ENCODE measurements at regions of chr1 and their contacts with region 1.

Region 1: DNA sequence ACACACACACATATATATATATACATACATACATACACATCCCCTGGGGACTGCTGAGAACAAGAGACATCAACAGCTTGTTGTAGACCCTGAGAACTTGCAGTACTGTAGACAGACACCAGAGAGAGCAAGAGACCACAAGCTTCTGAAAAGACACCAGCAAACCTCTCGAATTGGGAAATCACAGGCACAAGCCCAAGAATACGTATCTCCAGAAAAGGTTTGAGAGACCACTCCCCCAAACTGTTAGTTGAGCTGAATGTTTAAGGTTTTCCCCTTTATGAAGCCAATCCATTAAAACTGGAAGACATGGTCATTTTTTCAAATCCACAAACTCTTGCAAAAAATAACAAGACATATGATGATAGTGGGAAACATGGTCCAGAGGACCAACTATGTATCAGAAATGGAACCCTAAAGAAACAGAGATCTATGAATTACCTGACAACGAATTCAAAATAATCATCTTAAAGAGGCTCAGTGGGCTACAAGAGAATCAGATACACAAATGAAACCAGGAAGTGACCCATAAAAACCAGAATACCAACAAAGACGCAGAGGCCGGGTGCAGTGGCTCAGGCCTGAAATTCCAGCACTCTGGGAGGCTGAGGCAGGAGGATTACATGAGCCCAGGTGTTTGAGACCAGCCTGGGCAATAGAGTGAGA is 45.1 kb downstream of the SLC2A1 start:
- DNase-seq: peak; percentile 82
- ATAC-seq: peak; percentile 98
- H3K4me3 ChIP-seq: no peak overlapping the region
- H3K27ac ChIP-seq: no peak overlapping the region
- H3K4me1 ChIP-seq: no peaks in the 10 kb centered on the region
- H3K27me3 ChIP-seq: peaks cover 3% of the 10 kb centered on the region
- CTCF ChIP-seq: peak; percentile 77
- POLR2A ChIP-seq: no peak
- RAD21 ChIP-seq: peak; percentile 92

Region 2: GRCh38 chr1:42576935-42577334 is 336.6 kb before region 1 on chr1:
- CTCF ChIA-PET with region 1: no interaction called
- POLR2A ChIA-PET with region 1: no interaction called
- dilution Hi-C with region 1: no loop called
- in situ Hi-C with region 1: no loop called
- intact Hi-C with region 1: loop called (anchors 1 kb)
- DNase-seq: no peak
- ATAC-seq: no peak
- H3K4me3 ChIP-seq: no peak overlapping the region
- H3K27ac ChIP-seq: no peak overlapping the region
- H3K4me1 ChIP-seq: no peaks in the 10 kb centered on the region
- H3K27me3 ChIP-seq: peaks cover 3% of the 10 kb centered on the region
- CTCF ChIP-seq: no peak
- POLR2A ChIP-seq: no peak
- RAD21 ChIP-seq: no peak

Region 3: DNA sequence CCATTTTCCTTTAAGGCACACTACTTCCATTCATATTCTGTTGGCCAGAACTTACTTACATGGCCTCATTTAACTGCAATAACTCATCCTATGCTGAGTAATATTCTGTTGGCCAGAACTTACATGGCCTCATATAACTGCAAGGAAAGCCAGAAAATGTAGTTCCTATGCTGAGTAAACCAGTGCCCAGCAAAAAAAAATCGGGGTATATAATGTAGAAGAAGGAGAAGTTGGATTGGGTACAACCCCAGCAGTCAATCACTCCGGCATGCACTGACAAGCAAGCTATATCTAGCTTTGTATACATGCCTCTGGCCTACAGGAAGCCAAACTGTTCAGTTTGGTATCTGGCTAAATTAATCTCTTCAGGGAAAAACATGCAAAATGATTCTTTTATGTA is 294.7 kb before region 1 on chr1:
- CTCF ChIA-PET with region 1: no interaction called
- POLR2A ChIA-PET with region 1: no interaction called
- dilution Hi-C with region 1: no loop called
- in situ Hi-C with region 1: no loop called
- intact Hi-C with region 1: no loop called
- DNase-seq: peak; percentile 4
- ATAC-seq: no peak; the same call in 1 of the 2 replicates
- H3K4me3 ChIP-seq: no peak overlapping the region
- H3K27ac ChIP-seq: no peak overlapping the region
- H3K4me1 ChIP-seq: no peaks in the 10 kb centered on the region
- H3K27me3 ChIP-seq: peaks cover 4% of the 10 kb centered on the region; the same call in 1 of the 2 replicates
- CTCF ChIP-seq: no peak
- POLR2A ChIP-seq: no peak
- RAD21 ChIP-seq: no peak

Region 4: DNA sequence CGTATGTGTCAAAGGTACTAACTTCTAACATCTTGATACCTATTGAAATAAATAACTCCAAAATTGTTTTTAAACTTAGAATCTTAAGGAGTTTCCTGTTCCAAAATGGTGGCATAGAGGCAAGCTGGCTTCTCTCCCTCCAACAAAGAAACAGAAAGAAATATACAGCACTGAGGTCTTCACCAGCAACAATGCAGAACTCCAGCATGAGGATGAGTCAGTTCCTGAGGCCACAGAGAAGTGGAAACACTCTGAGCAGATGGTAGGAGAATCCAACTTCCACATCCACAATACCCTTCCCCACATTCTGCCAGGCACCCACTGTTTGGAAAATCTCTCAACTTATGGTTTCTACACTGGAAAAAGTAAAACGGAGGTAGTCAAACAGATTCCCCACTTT is 267.5 kb before region 1 on chr1:
- CTCF ChIA-PET with region 1: no interaction called
- POLR2A ChIA-PET with region 1: no interaction called
- dilution Hi-C with region 1: no loop called
- in situ Hi-C with region 1: no loop called
- intact Hi-C with region 1: no loop called
- DNase-seq: peak; percentile 21
- ATAC-seq: no peak
- H3K4me3 ChIP-seq: no peak overlapping the region
- H3K27ac ChIP-seq: no peak overlapping the region
- H3K4me1 ChIP-seq: no peaks in the 10 kb centered on the region
- H3K27me3 ChIP-seq: peaks cover 5% of the 10 kb centered on the region; the same call in 1 of the 2 replicates
- CTCF ChIP-seq: no peak
- POLR2A ChIP-seq: no peak
- RAD21 ChIP-seq: no peak

Region 5: GRCh38 chr1:42784946-42785693 is 128.4 kb before region 1 on chr1 and contains the start of gene TMEM269:
- CTCF ChIA-PET with region 1: no interaction called
- POLR2A ChIA-PET with region 1: no interaction called
- dilution Hi-C with region 1: no loop called
- in situ Hi-C with region 1: loop called (anchors 10 kb)
- intact Hi-C with region 1: no loop called
- DNase-seq: no peak
- ATAC-seq: peak; percentile 78
- H3K4me3 ChIP-seq: peak within 1 kb of the TSS; percentile 38
- H3K27ac ChIP-seq: no peak within 1 kb of the TSS
- H3K4me1 ChIP-seq: peaks cover 3% of the 10 kb centered on the region; the same call in 1 of the 2 replicates
- H3K27me3 ChIP-seq: no peaks in the 10 kb centered on the region
- CTCF ChIP-seq: no peak
- POLR2A ChIP-seq: no peak
- RAD21 ChIP-seq: no peak
- total RNA-seq, gene TMEM269: not detected in 2 replicates

Region 6: GRCh38 chr1:42924082-42924850 is 10.7 kb after region 1 on chr1:
- CTCF ChIA-PET with region 1: interaction called, 21 read pairs
- POLR2A ChIA-PET with region 1: no interaction called
- dilution Hi-C with region 1: no loop called
- in situ Hi-C with region 1: no loop called
- intact Hi-C with region 1: no loop called
- DNase-seq: peak; percentile 75
- ATAC-seq: peak; percentile 93
- H3K4me3 ChIP-seq: peak overlapping the region; percentile 67
- H3K27ac ChIP-seq: peak overlapping the region; percentile 72
- H3K4me1 ChIP-seq: peaks cover 3% of the 10 kb centered on the region
- H3K27me3 ChIP-seq: no peaks in the 10 kb centered on the region
- CTCF ChIP-seq: peak; percentile 27; the same call in 1 of the 2 replicates
- POLR2A ChIP-seq: peak; percentile 60
- RAD21 ChIP-seq: no peak

Region 7: GRCh38 chr1:43227143-43227764 is 313.7 kb after region 1 on chr1:
- CTCF ChIA-PET with region 1: interaction called, 3 read pairs
- POLR2A ChIA-PET with region 1: no interaction called
- dilution Hi-C with region 1: no loop called
- in situ Hi-C with region 1: no loop called
- intact Hi-C with region 1: loop called (anchors 10 kb)
- DNase-seq: peak; percentile 70
- ATAC-seq: peak; percentile 81
- H3K4me3 ChIP-seq: no peak overlapping the region
- H3K27ac ChIP-seq: no peak overlapping the region
- H3K4me1 ChIP-seq: peaks cover 18% of the 10 kb centered on the region
- H3K27me3 ChIP-seq: no peaks in the 10 kb centered on the region
- CTCF ChIP-seq: peak; percentile 92
- POLR2A ChIP-seq: 0 out of 2 replicates have a peak, but pooled peaks have one; percentile 45
- RAD21 ChIP-seq: peak; percentile 98

Region 8: GRCh38 chr1:43300378-43301094 is 387.0 kb after region 1 on chr1 and contains the start of gene TIE1:
- CTCF ChIA-PET with region 1: no interaction called
- POLR2A ChIA-PET with region 1: no interaction called
- dilution Hi-C with region 1: no loop called
- in situ Hi-C with region 1: no loop called
- intact Hi-C with region 1: no loop called
- DNase-seq: no peak
- ATAC-seq: no peak
- H3K4me3 ChIP-seq: no peak within 1 kb of the TSS
- H3K27ac ChIP-seq: no peak within 1 kb of the TSS
- H3K4me1 ChIP-seq: peaks cover 6% of the 10 kb centered on the region; the same call in 1 of the 2 replicates
- H3K27me3 ChIP-seq: peaks cover 2% of the 10 kb centered on the region; the same call in 1 of the 2 replicates
- CTCF ChIP-seq: no peak
- POLR2A ChIP-seq: no peak
- RAD21 ChIP-seq: no peak
- total RNA-seq, gene TIE1: 2.3 and 3.3 TPM in 2 replicates

Region 9: GRCh38 chr1:43414634-43415223 is 501.2 kb after region 1 on chr1:
- CTCF ChIA-PET with region 1: no interaction called
- POLR2A ChIA-PET with region 1: no interaction called
- dilution Hi-C with region 1: no loop called
- in situ Hi-C with region 1: loop called (anchors 25 kb)
- intact Hi-C with region 1: loop called (anchors 5 kb)
- DNase-seq: peak; percentile 52
- ATAC-seq: peak; percentile 88
- H3K4me3 ChIP-seq: no peak overlapping the region
- H3K27ac ChIP-seq: no peak overlapping the region
- H3K4me1 ChIP-seq: no peaks in the 10 kb centered on the region
- H3K27me3 ChIP-seq: no peaks in the 10 kb centered on the region
- CTCF ChIP-seq: peak; percentile 66
- POLR2A ChIP-seq: no peak
- RAD21 ChIP-seq: peak; percentile 83